ENCODE measurements at regions of chr11 and their contacts with region 1.

Region 1: GRCh38 chr11:34318111-34319037 is 39.4 kb downstream of the ABTB2 start:
- DNase-seq: peak; percentile 69 to 86
- ATAC-seq: peak; percentile 87 to 89
- H3K4me3 ChIP-seq: peak overlapping the region; percentile 11; the same call in 1 of the 3 replicates
- H3K27ac ChIP-seq: peak overlapping the region; percentile 82 to 83
- H3K4me1 ChIP-seq: peaks cover 58% of the 10 kb centered on the region
- CTCF ChIP-seq: no peak
- EP300 ChIP-seq: 0 out of 5 replicates have a peak, but pooled peaks of 1 of the 2 experiments have one; percentile 27
- POLR2A ChIP-seq: no peak
- RAD21 ChIP-seq: peak; percentile 7 to 38; a peak in 2 of 5 replicates

Region 2: GRCh38 chr11:34331329-34331728 is 13.0 kb after region 1 on chr11:
- CTCF ChIA-PET with region 1: interaction called, 10 read pairs
- POLR2A ChIA-PET with region 1: no interaction called
- DNase-seq: peak; percentile 64 to 67
- ATAC-seq: peak; percentile 57 to 80; a peak in 5 of 6 replicates
- H3K4me3 ChIP-seq: no peak overlapping the region
- H3K27ac ChIP-seq: peak overlapping the region; percentile 34 to 68; a peak in 4 of 6 replicates
- H3K4me1 ChIP-seq: peaks cover 74% of the 10 kb centered on the region
- CTCF ChIP-seq: no peak
- EP300 ChIP-seq: no peak
- POLR2A ChIP-seq: no peak
- RAD21 ChIP-seq: no peak

Region 3: GRCh38 chr11:34344768-34345539 is 26.6 kb after region 1 on chr11:
- CTCF ChIA-PET with region 1: interaction called, 7 read pairs
- POLR2A ChIA-PET with region 1: interaction called, 16 read pairs
- DNase-seq: peak; percentile 67 to 90
- ATAC-seq: peak; percentile 75
- H3K4me3 ChIP-seq: peak overlapping the region; percentile 9; the same call in 1 of the 3 replicates
- H3K27ac ChIP-seq: peak overlapping the region; percentile 88 to 89
- H3K4me1 ChIP-seq: peaks cover 100% of the 10 kb centered on the region
- CTCF ChIP-seq: no peak
- EP300 ChIP-seq: peak; percentile 71 to 83; a peak in 4 of 5 replicates
- POLR2A ChIP-seq: no peak
- RAD21 ChIP-seq: peak in 1 of 2 experiments; percentile 15; a peak in 3 of 5 replicates

Region 4: DNA sequence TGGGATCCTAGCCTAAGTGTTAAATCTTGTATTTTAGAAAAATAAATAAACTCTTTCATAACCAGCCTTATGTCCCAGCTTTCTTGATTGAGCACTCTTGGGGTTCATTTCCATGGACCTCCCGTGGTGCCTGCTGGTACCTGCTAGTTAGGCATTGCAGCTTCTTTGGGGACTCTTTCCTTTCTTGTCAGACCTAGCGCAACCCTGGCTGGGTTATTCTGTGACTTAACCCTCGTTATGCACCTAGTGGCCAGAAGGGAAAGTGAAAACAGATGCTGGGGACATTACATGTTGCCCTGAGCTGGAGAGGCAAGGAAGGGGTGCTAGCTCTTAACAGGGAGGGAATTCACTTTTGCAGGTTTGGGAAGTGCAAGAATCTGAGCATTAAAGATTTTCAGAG is 551.1 kb after region 1 on chr11:
- CTCF ChIA-PET with region 1: no interaction called
- POLR2A ChIA-PET with region 1: no interaction called
- DNase-seq: peak in 1 of 2 experiments; percentile 18
- ATAC-seq: peak; percentile 67 to 74; a peak in 4 of 6 replicates
- H3K4me3 ChIP-seq: no peak overlapping the region
- H3K27ac ChIP-seq: 0 out of 6 replicates have a peak overlapping the region, but pooled peaks of 1 of the 2 experiments have one; percentile 10
- H3K4me1 ChIP-seq: no peaks in the 10 kb centered on the region
- CTCF ChIP-seq: no peak
- EP300 ChIP-seq: no peak
- POLR2A ChIP-seq: no peak
- RAD21 ChIP-seq: no peak

Measured in A549 (cell line).